ENCODE measurements at regions of chr3 and their contacts with region 1.

Region 1: GRCh38 chr3:50337191-50337841 is 3.3 kb downstream of the RASSF1 start:
- DNase-seq: peak; percentile 98

Region 2: GRCh38 chr3:50292159-50293078 is 44.9 kb before region 1 on chr3 and contains the start of gene IFRD2:
- CTCF ChIA-PET with region 1: no interaction called
- POLR2A ChIA-PET with region 1: interaction called, 15 read pairs
- DNase-seq: peak; percentile 93

Region 3: GRCh38 chr3:50321336-50322114 is 15.8 kb before region 1 on chr3:
- CTCF ChIA-PET with region 1: no interaction called
- POLR2A ChIA-PET with region 1: interaction called, 23 read pairs
- DNase-seq: peak; percentile 88

Region 4: DNA sequence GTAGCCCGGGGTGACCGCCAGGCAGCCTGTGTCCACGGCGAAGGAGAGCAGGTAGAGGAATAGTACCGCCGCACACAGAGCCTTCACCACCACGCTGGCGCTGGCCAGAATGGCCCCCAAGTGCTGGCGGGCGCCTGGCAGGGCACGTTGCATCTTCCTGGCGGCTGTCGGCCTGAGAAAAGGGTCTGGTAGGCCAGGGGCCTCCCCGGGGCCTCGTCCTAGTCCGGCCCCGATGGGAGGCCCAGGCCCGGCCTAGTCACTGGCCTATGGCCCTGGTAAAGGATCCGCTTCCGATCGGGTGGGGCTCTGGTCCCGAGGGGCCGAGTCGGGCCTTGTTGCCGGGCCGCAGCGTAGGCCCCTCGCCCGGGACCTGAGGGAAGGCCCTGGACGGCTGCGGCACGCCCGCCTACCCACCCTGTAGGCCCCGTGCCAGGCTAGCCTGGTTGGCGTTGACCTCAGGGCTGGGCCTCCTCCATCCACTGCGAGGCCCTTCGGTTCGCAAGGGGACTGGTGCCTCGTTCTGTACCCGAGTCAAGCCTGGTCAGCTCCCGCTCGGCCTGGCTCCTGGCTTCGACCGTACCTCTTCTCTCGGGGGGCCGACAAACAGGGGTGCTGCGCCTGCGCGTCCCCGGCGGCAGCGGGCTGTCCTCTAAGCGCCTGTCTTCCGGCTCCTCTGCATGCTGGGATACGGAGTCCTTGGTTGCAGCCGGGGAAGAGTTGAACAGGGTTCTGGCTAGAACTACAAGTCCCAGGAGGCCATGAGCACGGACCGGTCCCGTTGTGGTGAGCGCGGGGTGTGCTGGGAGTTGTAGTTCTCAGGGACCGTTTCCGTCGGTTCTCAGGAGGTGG is 21.8 kb after region 1 on chr3 and contains the start of gene TMEM115:
- CTCF ChIA-PET with region 1: interaction called, 3 read pairs
- POLR2A ChIA-PET with region 1: interaction called, 119 read pairs
- DNase-seq: peak; percentile 97

Region 5: GRCh38 chr3:50454481-50455070 is 117.3 kb after region 1 on chr3:
- CTCF ChIA-PET with region 1: no interaction called
- POLR2A ChIA-PET with region 1: no interaction called
- DNase-seq: no peak

Region 6: DNA sequence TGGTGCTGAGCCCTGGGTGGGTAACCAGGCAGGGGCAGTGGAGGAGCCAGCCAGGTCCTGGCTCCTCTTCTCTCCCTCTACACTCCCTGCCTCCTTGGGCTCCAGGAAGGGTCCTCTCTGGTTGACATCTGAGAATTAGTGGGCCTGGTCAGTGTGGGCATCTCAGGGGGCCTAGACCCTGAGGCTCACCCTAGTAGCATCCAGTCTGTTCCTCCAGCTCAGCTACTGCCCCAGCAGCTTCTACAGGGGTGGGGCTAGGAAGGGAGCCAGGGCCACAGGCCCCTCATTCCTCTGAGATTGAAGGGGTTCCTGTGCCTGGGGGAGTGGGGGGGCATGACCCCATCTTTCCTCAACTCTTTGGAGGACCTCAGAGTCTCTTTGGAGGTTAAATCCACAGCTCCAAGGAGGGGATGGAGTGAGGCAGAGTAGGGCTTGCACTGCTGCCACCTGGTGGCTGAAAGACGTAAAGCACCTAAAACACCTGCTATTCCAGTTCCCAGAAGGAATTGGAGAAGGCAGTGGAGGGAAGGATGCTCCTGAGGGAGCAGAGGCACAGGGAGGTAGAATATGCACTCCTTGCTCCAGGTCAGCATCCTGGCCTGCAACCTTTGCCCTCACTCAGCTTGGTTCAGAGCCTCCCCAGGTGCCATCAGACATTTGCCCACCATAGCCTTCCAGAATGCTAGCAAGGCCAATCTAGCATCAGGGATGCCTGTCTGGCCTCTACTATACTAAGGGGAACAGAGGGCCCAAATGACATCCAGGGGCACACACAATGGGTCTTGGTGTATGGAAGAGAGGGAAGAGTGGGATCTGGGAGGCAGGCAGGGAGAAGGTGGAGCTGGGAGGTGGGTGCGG is 205.1 kb after region 1 on chr3:
- CTCF ChIA-PET with region 1: no interaction called
- POLR2A ChIA-PET with region 1: no interaction called
- DNase-seq: peak; percentile 88